ENCODE measurements at regions of chr20 and their contacts with region 1.

Region 1: DNA sequence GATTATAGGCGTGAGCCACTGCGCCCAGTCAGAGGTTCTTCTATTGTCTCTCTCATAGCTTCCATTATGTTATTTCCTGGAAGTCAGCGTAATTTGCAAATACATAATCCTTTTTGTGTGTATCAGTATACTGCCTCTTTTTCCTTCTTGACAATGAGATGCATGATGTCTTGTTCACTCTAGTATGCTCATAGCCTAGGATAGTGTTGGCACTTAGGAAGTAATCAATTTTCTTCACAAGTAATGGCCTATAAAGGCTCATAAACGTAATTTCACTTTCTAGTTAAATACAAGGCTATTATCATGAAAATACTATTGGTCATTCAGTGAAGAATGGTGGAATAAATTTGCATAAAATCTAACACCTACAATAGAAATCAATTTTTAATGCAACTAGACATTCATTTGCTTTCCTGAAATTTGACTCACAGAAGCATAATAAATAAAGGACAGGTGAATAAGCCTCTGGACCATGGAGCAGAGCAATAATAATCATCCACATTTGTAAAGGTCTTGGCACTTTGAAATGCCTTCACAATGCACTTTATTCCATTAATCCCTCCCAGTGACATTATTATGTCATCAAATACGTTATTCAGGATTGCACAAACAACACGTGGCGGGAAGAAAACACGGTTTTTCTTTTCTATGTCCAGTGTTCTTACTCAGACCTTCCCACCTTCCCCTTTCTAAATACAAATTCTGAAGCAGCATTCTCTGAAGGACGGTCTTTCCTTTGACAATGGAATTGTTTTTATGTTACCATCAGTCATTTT is 366.8 kb upstream of the BTBD3 start:
- DNase-seq: no peak
- H3K4me3 ChIP-seq: no peak overlapping the region
- H3K27ac ChIP-seq: no peak overlapping the region
- H3K4me1 ChIP-seq: no peaks in the 10 kb centered on the region
- H3K27me3 ChIP-seq: no peaks in the 10 kb centered on the region
- CTCF ChIP-seq: no peak

Region 2: GRCh38 chr20:10006447-10007090 is 1544.3 kb before region 1 on chr20:
- CTCF ChIA-PET with region 1: interaction called, 16 read pairs
- dilution Hi-C with region 1: no loop called
- in situ Hi-C with region 1: no loop called
- intact Hi-C with region 1: no loop called
- DNase-seq: no peak
- H3K4me3 ChIP-seq: no peak overlapping the region
- H3K27ac ChIP-seq: no peak overlapping the region
- H3K4me1 ChIP-seq: no peaks in the 10 kb centered on the region
- H3K27me3 ChIP-seq: no peaks in the 10 kb centered on the region
- CTCF ChIP-seq: no peak

Region 3: GRCh38 chr20:11432407-11432806 is 118.4 kb before region 1 on chr20:
- CTCF ChIA-PET with region 1: no interaction called
- dilution Hi-C with region 1: no loop called
- in situ Hi-C with region 1: no loop called
- intact Hi-C with region 1: no loop called
- DNase-seq: peak; percentile 92
- H3K4me3 ChIP-seq: no peak overlapping the region
- H3K27ac ChIP-seq: no peak overlapping the region
- H3K4me1 ChIP-seq: peaks cover 12% of the 10 kb centered on the region
- H3K27me3 ChIP-seq: no peaks in the 10 kb centered on the region
- CTCF ChIP-seq: no peak

Region 4: GRCh38 chr20:11754451-11754850 is 203.6 kb after region 1 on chr20:
- CTCF ChIA-PET with region 1: no interaction called
- dilution Hi-C with region 1: no loop called
- in situ Hi-C with region 1: no loop called
- intact Hi-C with region 1: no loop called
- DNase-seq: peak; percentile 23
- H3K4me3 ChIP-seq: no peak overlapping the region
- H3K27ac ChIP-seq: no peak overlapping the region
- H3K4me1 ChIP-seq: no peaks in the 10 kb centered on the region
- H3K27me3 ChIP-seq: no peaks in the 10 kb centered on the region
- CTCF ChIP-seq: no peak

Measured in mammary epithelial cell (primary cell).